ENCODE measurements at regions of chr7 and their contacts with region 1.

Region 1: GRCh38 chr7:138720286-138720685 is 19.1 kb upstream of the SVOPL start:
- DNase-seq: no peak
- H3K4me3 ChIP-seq: no peak overlapping the region
- H3K27ac ChIP-seq: no peak overlapping the region
- H3K4me1 ChIP-seq: peaks cover 0 to 12% (median 7%) of the 10 kb centered on the region in 4 experiments
- H3K27me3 ChIP-seq: no peaks in the 10 kb centered on the region

Region 2: DNA sequence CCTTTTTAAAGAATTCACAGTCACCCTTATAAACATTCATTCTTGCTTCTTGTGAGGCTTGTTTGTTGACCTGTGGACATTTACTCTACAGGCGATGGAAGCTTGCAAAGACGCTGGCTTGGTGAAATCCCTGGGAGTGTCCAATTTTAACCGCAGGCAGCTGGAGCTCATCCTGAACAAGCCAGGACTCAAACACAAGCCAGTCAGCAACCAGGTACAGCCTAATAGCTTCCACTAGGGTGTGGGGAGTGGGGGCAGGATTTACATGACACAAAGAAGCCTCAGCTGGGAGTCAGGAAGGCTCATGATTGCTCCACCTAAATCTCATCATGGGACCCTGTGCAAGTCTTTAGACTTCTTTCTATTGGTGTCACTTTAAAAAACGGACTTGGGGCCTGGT is 615.1 kb before region 1 on chr7:
- CTCF ChIA-PET with region 1: no interaction called
- POLR2A ChIA-PET with region 1: no interaction called
- DNase-seq: no peak
- H3K4me3 ChIP-seq: no peak overlapping the region
- H3K27ac ChIP-seq: no peak overlapping the region
- H3K4me1 ChIP-seq: no peaks in the 10 kb centered on the region
- H3K27me3 ChIP-seq: no peaks in the 10 kb centered on the region

Region 3: GRCh38 chr7:138625849-138626230 is 94.4 kb before region 1 on chr7:
- CTCF ChIA-PET with region 1: interaction called, 5 read pairs
- POLR2A ChIA-PET with region 1: interaction called, 23 read pairs
- DNase-seq: peak; percentile 49 to 86 (median 78)
- H3K4me3 ChIP-seq: peak overlapping the region in 4 of 7 experiments; percentile 15 to 45 (median 20)
- H3K27ac ChIP-seq: peak overlapping the region; percentile 8 to 73
- H3K4me1 ChIP-seq: peaks cover 15 to 44% (median 37%) of the 10 kb centered on the region in 4 experiments
- H3K27me3 ChIP-seq: no peaks in the 10 kb centered on the region

Region 4: DNA sequence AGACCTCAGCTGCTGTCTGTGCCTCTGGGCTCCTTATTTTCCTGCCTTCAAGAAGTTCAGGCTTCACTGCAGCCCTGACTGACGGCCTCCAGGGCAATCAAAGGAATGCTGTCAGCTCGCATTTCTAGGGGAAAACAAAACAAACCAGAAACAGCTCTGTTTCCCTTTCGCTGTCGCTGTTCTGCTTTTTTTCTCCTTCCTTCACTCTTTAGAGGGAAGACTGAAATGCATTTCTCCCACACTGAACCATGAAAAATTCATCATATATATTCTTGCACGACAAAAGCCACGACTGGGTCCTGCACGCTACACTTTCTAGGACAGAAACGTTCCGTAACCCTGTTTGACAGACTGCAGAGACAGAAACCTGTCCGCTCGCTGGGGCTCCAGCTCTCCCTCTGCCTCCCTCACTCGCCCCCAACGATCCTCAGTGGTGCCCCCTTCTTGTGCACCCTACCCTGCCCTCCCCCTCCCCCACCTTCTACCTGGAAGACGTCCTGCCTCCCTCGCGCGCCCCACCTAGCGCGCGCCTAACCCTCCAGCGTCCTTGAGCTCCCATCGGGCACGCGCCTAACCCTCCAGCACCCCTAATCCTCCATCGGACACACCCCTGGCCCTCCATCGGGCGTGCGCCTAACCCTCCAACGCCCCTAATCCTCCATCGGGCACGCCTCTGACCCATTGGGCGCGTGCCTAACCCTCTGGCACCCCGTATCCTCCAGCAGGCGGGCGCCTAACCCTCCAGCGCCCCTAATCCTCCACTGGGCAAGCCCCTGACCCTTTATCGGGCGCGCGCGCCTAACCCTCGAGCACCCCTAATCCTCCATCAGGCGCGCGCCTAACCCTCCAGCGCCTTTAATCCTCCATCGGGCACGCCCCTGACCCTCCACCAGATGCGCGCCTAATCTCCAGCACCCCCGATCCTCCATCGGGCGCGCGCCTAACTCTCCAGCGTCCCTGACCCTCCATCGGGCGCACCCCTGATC is 56.3 kb before region 1 on chr7:
- CTCF ChIA-PET with region 1: interaction called, 3 read pairs
- POLR2A ChIA-PET with region 1: interaction called, 12 read pairs
- DNase-seq: peak in 2 of 3 donors; percentile 24 to 64
- H3K4me3 ChIP-seq: peak overlapping the region; percentile 61 to 79 (median 66)
- H3K27ac ChIP-seq: peak overlapping the region in 1 of 2 experiments; percentile 36
- H3K4me1 ChIP-seq: peaks cover 11 to 64% (median 49%) of the 10 kb centered on the region in 4 experiments
- H3K27me3 ChIP-seq: no peaks in the 10 kb centered on the region

Region 5: GRCh38 chr7:138705167-138705566 is 15.1 kb before region 1 on chr7:
- CTCF ChIA-PET with region 1: interaction called, 6 read pairs
- POLR2A ChIA-PET with region 1: interaction called, 23 read pairs
- DNase-seq: peak; percentile 65 to 93 (median 90)
- H3K4me3 ChIP-seq: peak overlapping the region in 1 of 7 experiments; percentile 2
- H3K27ac ChIP-seq: no peak overlapping the region
- H3K4me1 ChIP-seq: peaks cover 3 to 38% (median 22%) of the 10 kb centered on the region in 4 experiments
- H3K27me3 ChIP-seq: no peaks in the 10 kb centered on the region

Region 6: GRCh38 chr7:138776166-138776894 is 56.0 kb after region 1 on chr7:
- CTCF ChIA-PET with region 1: no interaction called
- POLR2A ChIA-PET with region 1: no interaction called
- DNase-seq: no peak
- H3K4me3 ChIP-seq: no peak overlapping the region
- H3K27ac ChIP-seq: no peak overlapping the region
- H3K4me1 ChIP-seq: no peaks in the 10 kb centered on the region
- H3K27me3 ChIP-seq: no peaks in the 10 kb centered on the region

Region 7: DNA sequence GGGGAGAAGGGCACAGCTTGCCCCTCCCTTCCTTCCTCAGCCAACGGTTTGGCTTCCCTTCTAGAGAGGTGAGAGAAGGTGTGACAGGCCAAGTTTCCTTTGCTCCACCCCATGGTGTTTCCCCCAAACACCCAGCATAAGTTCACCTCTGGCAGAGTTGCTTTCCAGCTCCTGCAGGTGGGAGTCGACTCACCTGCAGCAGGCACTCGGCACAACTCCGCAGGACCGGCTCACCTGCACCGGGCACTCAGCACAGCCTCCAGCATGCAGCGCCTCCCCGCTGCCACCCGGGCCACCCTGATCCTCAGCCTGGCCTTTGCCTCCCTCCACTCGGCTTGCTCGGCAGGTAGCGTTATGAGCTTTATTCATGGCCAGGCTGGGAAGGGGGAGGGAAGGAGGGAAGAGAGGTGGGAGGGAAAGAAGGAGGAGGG is 77.6 kb after region 1 on chr7 and contains the starts of genes ATP6V0A4 and TMEM213:
- CTCF ChIA-PET with region 1: no interaction called
- POLR2A ChIA-PET with region 1: no interaction called
- DNase-seq: peak in 1 of 3 donors; percentile 1
- H3K4me3 ChIP-seq: no peak within 1 kb of the TSS
- H3K27ac ChIP-seq: no peak within 1 kb of the TSS
- H3K4me1 ChIP-seq: peaks cover 0 to 6% (median 0%) of the 10 kb centered on the region in 4 experiments
- H3K27me3 ChIP-seq: no peaks in the 10 kb centered on the region